CD4-positive, alpha-beta T cell (primary cell): ENCODE measurements at regions of chr12 and their contacts with region 1.

Region 1: GRCh38 chr12:21296751-21297406 is 37.8 kb downstream of the SLCO1A2 start:
- DNase-seq: peak in 4 of 14 experiments; percentile 18 to 25 (median 23)
- ATAC-seq: no peak
- H3K4me3 ChIP-seq: no peak overlapping the region
- H3K4me3 Mint-ChIP-seq: no peak overlapping the region
- H3K27ac ChIP-seq: no peak overlapping the region
- H3K27ac Mint-ChIP-seq: no peak overlapping the region
- H3K4me1 ChIP-seq: no peaks in the 10 kb centered on the region
- H3K4me1 Mint-ChIP-seq: peaks cover 8% of the 10 kb centered on the region
- H3K27me3 ChIP-seq: no peaks in the 10 kb centered on the region
- H3K27me3 Mint-ChIP-seq: peaks cover 13% of the 10 kb centered on the region
- CTCF ChIP-seq: peak; percentile 75

Region 2: DNA sequence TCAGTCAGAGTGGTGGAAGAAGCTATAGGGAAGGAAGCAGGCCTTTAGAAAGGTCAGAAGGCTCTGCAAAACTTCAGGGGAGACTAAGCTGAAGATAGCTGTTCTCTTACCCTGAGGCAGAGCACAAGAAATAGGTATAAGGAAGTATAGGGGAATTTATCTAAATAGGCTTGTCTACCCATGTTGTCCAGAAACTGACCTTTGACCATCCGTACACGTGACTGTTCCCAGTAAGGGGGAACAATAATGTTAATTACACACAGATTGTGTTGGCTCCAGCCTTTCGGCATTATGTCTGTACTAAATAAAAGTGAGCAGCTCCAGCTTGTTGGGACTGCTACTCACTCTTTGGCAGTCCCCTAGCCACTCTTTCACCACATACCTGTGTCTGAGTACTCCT is 106.9 kb before region 1 on chr12:
- CTCF ChIA-PET with region 1: no interaction called
- POLR2A ChIA-PET with region 1: no interaction called
- intact Hi-C with region 1: no loop called
- DNase-seq: no peak
- ATAC-seq: no peak
- H3K4me3 ChIP-seq: no peak overlapping the region
- H3K4me3 Mint-ChIP-seq: no peak overlapping the region
- H3K27ac ChIP-seq: no peak overlapping the region
- H3K27ac Mint-ChIP-seq: no peak overlapping the region
- H3K4me1 ChIP-seq: no peaks in the 10 kb centered on the region
- H3K4me1 Mint-ChIP-seq: no peaks in the 10 kb centered on the region
- H3K27me3 ChIP-seq: no peaks in the 10 kb centered on the region
- H3K27me3 Mint-ChIP-seq: no peaks in the 10 kb centered on the region
- CTCF ChIP-seq: no peak

Region 3: GRCh38 chr12:21429994-21430393 is 133.1 kb after region 1 on chr12:
- CTCF ChIA-PET with region 1: no interaction called
- POLR2A ChIA-PET with region 1: no interaction called
- intact Hi-C with region 1: loop called in 1 of 2 experiments (anchors 5 kb)
- DNase-seq: no peak
- ATAC-seq: no peak
- H3K4me3 ChIP-seq: no peak overlapping the region
- H3K4me3 Mint-ChIP-seq: no peak overlapping the region
- H3K27ac ChIP-seq: no peak overlapping the region
- H3K27ac Mint-ChIP-seq: no peak overlapping the region
- H3K4me1 ChIP-seq: no peaks in the 10 kb centered on the region
- H3K4me1 Mint-ChIP-seq: no peaks in the 10 kb centered on the region
- H3K27me3 ChIP-seq: no peaks in the 10 kb centered on the region
- H3K27me3 Mint-ChIP-seq: peaks cover 5% of the 10 kb centered on the region
- CTCF ChIP-seq: no peak

Region 4: DNA sequence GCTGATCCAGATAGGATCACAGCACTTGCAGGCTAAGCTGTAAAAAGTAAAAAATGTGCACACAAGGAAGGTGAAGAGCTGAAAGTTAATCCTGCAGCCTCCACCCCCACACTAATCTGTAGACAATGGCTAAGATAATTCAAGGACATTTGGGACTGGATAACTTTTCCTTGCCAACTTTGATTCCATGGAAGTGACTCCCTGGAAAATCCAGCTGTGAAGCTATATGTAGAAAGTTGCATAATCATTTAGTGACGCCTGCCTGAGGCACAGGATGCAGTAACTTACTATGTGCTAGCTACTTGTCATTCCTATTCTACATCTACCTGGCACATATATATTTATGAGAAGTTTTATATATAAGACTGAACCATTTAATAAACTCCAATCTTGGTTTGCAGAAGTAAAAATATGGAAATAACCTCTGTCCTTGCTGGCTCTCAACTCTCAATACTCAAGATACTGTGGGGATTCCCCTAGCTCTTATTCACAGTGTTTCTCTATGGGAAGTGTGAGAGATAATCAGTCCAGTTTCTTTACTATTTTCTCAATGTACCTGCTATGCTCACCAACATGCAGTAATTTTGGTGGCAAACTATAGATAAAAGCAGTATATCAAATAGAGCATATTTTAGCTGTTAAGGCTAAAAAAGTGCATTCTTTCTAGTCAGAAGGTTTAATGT is 346.0 kb after region 1 on chr12:
- CTCF ChIA-PET with region 1: no interaction called
- POLR2A ChIA-PET with region 1: no interaction called
- intact Hi-C with region 1: no loop called
- DNase-seq: peak in 1 of 14 experiments; percentile 25
- ATAC-seq: peak; percentile 41
- H3K4me3 ChIP-seq: no peak overlapping the region
- H3K4me3 Mint-ChIP-seq: no peak overlapping the region
- H3K27ac ChIP-seq: no peak overlapping the region
- H3K27ac Mint-ChIP-seq: peak overlapping the region; percentile 84
- H3K4me1 ChIP-seq: peaks cover 27% of the 10 kb centered on the region
- H3K4me1 Mint-ChIP-seq: peaks cover 91% of the 10 kb centered on the region
- H3K27me3 ChIP-seq: no peaks in the 10 kb centered on the region
- H3K27me3 Mint-ChIP-seq: no peaks in the 10 kb centered on the region
- CTCF ChIP-seq: no peak

Region 5: GRCh38 chr12:21683115-21683514 is 386.2 kb after region 1 on chr12:
- CTCF ChIA-PET with region 1: no interaction called
- POLR2A ChIA-PET with region 1: no interaction called
- intact Hi-C with region 1: loop called (anchors 5 kb)
- DNase-seq: no peak
- ATAC-seq: no peak
- H3K4me3 ChIP-seq: no peak overlapping the region
- H3K4me3 Mint-ChIP-seq: no peak overlapping the region
- H3K27ac ChIP-seq: no peak overlapping the region
- H3K27ac Mint-ChIP-seq: no peak overlapping the region
- H3K4me1 ChIP-seq: peaks cover 4% of the 10 kb centered on the region
- H3K4me1 Mint-ChIP-seq: peaks cover 25% of the 10 kb centered on the region
- H3K27me3 ChIP-seq: no peaks in the 10 kb centered on the region
- H3K27me3 Mint-ChIP-seq: no peaks in the 10 kb centered on the region
- CTCF ChIP-seq: no peak